OCI-LY7 (cell line): ENCODE measurements at regions of chr7 and their contacts with region 1.

Region 1: DNA sequence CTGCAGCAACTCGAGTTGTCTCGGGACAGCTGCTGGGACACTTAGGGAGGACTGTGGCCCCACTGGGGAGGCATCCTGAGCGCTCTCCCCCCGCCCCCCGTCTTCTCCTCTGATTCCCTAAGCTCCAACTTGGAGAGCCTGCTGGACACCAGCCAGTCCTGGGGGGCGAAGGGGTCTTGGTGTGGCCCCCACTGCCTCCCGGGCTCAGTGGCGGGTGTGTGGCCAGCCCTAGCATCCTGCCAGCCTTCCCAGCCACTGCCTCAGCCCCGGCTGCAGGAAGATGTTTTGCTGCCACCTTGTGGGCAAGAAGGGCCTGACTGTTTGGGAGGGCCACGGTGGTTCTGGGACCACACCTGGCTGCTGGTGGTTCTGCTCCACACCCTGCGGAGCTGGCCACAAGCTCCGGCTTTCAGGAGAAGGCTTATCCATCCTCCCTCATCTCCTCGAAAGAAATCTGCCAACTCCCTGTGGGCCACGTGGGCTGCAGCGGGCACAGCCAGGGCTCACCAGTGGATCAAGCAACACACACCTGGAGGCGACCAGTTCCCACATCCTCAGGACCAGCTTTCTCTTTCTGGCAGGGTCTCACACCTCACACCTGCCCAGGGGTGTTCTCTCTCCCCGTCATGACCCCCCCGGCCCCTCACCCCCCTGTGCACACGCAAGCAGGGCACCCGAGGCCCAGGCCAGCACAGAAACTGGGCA is 24.8 kb downstream of the AGAP3 start:
- DNase-seq: peak; percentile 74
- H3K4me3 ChIP-seq: no peak overlapping the region
- H3K27ac ChIP-seq: no peak overlapping the region
- H3K4me1 ChIP-seq: no peaks in the 10 kb centered on the region
- CTCF ChIP-seq: peak; percentile 86

Region 2: DNA sequence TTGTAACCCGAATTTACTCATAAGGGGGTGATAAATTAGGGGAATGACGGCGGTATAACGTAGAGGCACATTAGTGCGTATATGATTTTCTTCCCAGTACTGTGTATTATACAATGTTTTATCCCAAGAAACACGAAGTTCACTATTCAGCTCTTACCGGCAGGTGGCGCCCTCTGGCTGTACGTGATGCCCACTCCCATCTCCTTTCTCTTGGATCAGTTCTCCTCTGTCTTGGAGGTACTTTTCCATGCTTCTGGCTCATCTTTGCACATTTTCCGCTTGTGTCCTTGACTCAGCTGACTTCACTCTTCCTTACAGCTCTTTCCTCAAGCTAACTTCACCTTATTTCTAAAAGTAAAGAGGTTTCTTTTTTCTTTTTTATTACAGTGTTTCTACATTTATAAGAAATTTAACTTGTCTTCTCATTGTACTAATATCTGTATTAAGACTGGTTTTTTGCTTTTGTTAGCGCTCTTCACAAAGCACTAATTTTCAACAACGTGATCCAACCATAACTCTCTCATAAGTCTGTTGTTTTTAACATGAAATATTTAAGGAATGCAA is 332.3 kb before region 1 on chr7:
- CTCF ChIA-PET with region 1: no interaction called
- POLR2A ChIA-PET with region 1: no interaction called
- intact Hi-C with region 1: loop called (anchors 2 kb)
- DNase-seq: peak; percentile 69
- H3K4me3 ChIP-seq: no peak overlapping the region
- H3K27ac ChIP-seq: no peak overlapping the region
- H3K4me1 ChIP-seq: no peaks in the 10 kb centered on the region
- CTCF ChIP-seq: peak; percentile 98

Region 3: GRCh38 chr7:150962553-150963399 is 148.3 kb before region 1 on chr7:
- CTCF ChIA-PET with region 1: no interaction called
- POLR2A ChIA-PET with region 1: no interaction called
- intact Hi-C with region 1: loop called (anchors 2 kb)
- DNase-seq: peak; percentile 72
- H3K4me3 ChIP-seq: no peak overlapping the region
- H3K27ac ChIP-seq: no peak overlapping the region
- H3K4me1 ChIP-seq: peaks cover 9% of the 10 kb centered on the region
- CTCF ChIP-seq: peak; percentile 91

Region 4: DNA sequence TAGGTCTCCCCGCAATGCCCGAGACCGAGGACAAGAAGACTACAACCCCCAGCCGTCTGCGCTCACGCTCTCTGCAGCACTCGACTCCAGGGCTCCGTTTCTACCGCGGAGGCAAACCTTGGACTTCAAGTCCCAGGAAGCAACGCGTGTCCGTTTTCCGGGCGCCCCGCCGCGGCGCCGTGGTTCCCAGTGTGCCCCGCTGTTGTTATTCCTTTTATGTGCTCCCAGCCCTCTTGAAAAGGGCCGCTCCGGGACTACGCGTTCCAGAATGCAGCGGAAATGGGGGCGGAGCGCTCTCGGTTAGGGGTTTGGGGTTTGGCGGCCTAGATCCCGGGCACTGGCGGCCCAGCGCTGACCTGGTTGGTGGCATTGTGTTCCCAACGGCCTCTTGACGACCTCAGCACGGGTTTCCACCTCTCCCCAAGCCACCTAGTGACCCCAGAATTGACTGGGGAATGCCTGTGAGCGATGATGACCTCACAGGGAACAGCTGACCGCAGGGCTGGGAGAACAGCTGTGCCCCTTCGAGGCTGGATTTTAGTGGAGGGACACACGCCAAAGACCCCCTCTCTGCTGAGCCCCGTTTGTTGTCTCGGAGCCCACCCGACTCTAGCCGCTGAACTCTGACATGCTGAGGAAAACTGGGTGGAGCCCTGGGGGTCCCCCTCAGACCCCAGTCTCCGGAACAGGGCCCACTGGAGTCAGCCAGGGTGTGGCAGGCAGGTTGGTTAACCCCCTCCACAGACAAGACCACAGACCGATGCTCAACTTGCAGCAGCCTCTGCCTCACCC is 52.9 kb before region 1 on chr7:
- CTCF ChIA-PET with region 1: interaction called, 5 read pairs
- POLR2A ChIA-PET with region 1: interaction called, 3 read pairs
- intact Hi-C with region 1: loop called (anchors 1 kb)
- DNase-seq: peak; percentile 99
- H3K4me3 ChIP-seq: peak overlapping the region; percentile 98
- H3K27ac ChIP-seq: peak overlapping the region; percentile 70
- H3K4me1 ChIP-seq: peaks cover 37% of the 10 kb centered on the region
- CTCF ChIP-seq: no peak

Region 5: DNA sequence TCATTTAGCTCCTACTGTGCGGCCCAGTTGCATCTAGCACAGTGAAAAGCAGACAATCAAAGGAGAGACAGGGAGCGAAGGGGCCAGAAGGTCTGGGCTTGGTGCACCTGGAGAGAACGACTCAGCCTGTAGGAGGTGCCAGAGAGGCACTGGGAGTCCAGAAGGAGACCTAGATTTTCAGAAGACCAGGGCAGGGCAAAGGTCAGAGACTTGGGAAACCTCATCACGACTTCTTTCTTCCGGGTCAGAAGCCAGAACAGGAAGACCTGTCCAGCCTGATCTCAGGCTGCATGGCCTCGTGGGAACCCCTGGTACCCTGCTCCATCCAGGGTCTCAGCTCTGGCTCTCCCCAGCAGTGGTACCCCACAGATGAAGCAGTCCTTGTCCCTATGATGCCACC is 19.7 kb before region 1 on chr7:
- CTCF ChIA-PET with region 1: interaction called, 13 read pairs
- POLR2A ChIA-PET with region 1: interaction called, 3 read pairs
- intact Hi-C with region 1: loop called (anchors 2 kb)
- DNase-seq: peak; percentile 42
- H3K4me3 ChIP-seq: no peak overlapping the region
- H3K27ac ChIP-seq: no peak overlapping the region
- H3K4me1 ChIP-seq: no peaks in the 10 kb centered on the region
- CTCF ChIP-seq: peak; percentile 76